Activated B cell treated with CpG ODN at 0.5 μM for 24 hours (primary cell): ENCODE measurements at regions of chr7 and their contacts with region 1.

Region 1: DNA sequence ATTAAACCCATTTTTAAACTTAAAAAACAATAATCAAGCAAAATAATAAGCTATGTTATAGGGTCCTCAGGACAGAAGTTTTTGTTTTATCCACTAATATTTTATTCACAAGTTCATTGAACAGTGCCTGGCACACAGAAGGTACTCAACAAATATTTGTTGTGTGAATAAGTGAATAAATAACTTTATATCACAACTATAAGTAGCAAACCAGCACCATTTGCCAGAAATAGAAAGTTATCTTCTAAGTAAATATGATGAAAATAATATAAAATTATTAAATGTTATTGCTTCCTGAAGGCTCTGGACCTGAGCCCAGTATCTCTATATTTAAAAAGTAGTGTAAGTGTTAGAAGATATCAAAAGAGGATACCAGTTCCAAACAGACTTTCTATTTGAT is 29.1 kb upstream of the SEPTIN7 start:
- DNase-seq: no peak
- ATAC-seq: no peak
- H3K4me3 Mint-ChIP-seq: no peak overlapping the region
- H3K27ac Mint-ChIP-seq: no peak overlapping the region
- H3K4me1 Mint-ChIP-seq: peaks cover 4% of the 10 kb centered on the region
- H3K27me3 Mint-ChIP-seq: no peaks in the 10 kb centered on the region
- CTCF ChIP-seq: no peak

Region 2: DNA sequence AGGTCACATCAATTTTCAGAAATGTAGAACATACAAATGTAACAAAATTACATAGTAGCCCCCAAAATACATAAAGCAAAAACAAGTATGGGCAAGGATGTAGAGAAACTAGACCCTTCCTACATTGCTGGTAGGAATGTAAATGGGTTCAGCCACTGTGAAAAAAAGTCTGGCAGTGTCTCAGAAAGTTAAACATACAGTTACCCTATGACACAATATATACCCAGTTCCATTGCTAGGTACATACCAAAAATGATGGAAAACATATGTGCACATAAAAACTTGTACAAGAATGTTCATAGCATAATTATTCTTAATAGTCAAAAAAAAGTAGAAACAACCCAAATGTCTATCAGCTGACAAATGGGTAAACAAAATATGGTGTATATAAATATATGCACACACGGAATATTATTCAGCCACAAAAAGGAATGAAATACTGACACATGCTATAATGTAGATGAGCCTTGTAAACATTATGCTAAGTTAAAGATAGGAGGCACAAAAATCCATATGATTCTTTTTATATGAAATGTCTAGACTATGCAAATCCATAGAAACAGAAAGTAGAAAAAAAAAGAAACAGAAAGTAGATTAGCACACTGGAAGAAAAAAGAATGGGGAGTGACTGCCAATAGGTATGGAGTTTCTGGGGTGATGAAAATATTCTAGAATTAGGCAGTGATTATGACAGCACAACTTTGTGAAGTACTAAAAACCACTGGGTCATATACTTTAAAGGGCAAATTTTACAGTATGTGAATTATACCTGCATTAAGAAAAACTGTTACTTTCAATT is 90.3 kb before region 1 on chr7:
- CTCF ChIA-PET with region 1: no interaction called
- POLR2A ChIA-PET with region 1: no interaction called
- intact Hi-C with region 1: no loop called
- DNase-seq: no peak
- ATAC-seq: no peak
- H3K4me3 Mint-ChIP-seq: no peak overlapping the region
- H3K27ac Mint-ChIP-seq: no peak overlapping the region
- H3K4me1 Mint-ChIP-seq: peaks cover 48% of the 10 kb centered on the region
- H3K27me3 Mint-ChIP-seq: no peaks in the 10 kb centered on the region
- CTCF ChIP-seq: no peak

Region 3: DNA sequence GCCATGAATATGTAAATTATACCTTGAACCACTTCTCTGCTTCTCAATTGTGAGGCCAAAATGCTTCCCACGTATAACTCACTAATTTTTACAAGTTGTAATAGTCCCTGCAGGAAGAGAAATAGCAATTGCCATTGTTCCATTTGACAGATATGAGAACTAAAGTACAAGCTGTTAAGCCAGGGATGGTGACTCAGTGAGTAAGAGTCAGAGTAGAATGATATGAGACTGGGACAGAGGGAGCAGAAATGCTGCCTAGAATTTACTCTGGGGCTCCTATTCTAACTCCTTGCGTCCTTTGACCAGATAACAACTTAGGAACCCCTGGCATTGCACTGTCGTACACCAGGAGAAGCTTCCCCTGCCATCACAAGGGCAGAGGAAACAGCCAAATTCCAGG is 16.1 kb before region 1 on chr7:
- CTCF ChIA-PET with region 1: no interaction called
- POLR2A ChIA-PET with region 1: no interaction called
- intact Hi-C with region 1: loop called (anchors 2 kb)
- DNase-seq: no peak
- ATAC-seq: no peak
- H3K4me3 Mint-ChIP-seq: no peak overlapping the region
- H3K27ac Mint-ChIP-seq: no peak overlapping the region
- H3K4me1 Mint-ChIP-seq: peaks cover 7% of the 10 kb centered on the region
- H3K27me3 Mint-ChIP-seq: no peaks in the 10 kb centered on the region
- CTCF ChIP-seq: no peak

Region 4: GRCh38 chr7:35808815-35809214 is 37.0 kb after region 1 on chr7:
- CTCF ChIA-PET with region 1: no interaction called
- POLR2A ChIA-PET with region 1: no interaction called
- intact Hi-C with region 1: no loop called
- DNase-seq: no peak
- ATAC-seq: no peak
- H3K4me3 Mint-ChIP-seq: no peak overlapping the region
- H3K27ac Mint-ChIP-seq: no peak overlapping the region
- H3K4me1 Mint-ChIP-seq: peaks cover 77% of the 10 kb centered on the region
- H3K27me3 Mint-ChIP-seq: no peaks in the 10 kb centered on the region
- CTCF ChIP-seq: no peak